A673 (cell line): ENCODE measurements at regions of chr1 and their contacts with region 1.

Region 1: GRCh38 chr1:150621497-150622302 is 7.7 kb downstream of the ENSA start:
- DNase-seq: peak; percentile 68
- H3K4me3 ChIP-seq: no peak overlapping the region
- H3K27ac ChIP-seq: no peak overlapping the region
- H3K4me1 ChIP-seq: peaks cover 20% of the 10 kb centered on the region
- H3K27me3 ChIP-seq: no peaks in the 10 kb centered on the region
- CTCF ChIP-seq: peak; percentile 73

Region 2: GRCh38 chr1:150578965-150579798 is 42.5 kb before region 1 on chr1 and contains the start of gene MCL1:
- CTCF ChIA-PET with region 1: interaction called, 7 read pairs
- POLR2A ChIA-PET with region 1: interaction called, 4 read pairs
- intact Hi-C with region 1: loop called (anchors 2 kb)
- DNase-seq: peak; percentile 97
- H3K4me3 ChIP-seq: peak within 1 kb of the TSS; percentile 90
- H3K27ac ChIP-seq: peak within 1 kb of the TSS; percentile 98
- H3K4me1 ChIP-seq: peaks cover 26% of the 10 kb centered on the region
- H3K27me3 ChIP-seq: no peaks in the 10 kb centered on the region
- CTCF ChIP-seq: no peak
- total RNA-seq, gene MCL1: 123 and 163 TPM in 2 replicates

Region 3: GRCh38 chr1:150813058-150813707 is 191.5 kb after region 1 on chr1:
- CTCF ChIA-PET with region 1: interaction called, 6 read pairs
- POLR2A ChIA-PET with region 1: no interaction called
- intact Hi-C with region 1: loop called (anchors 5 kb)
- DNase-seq: peak; percentile 54
- H3K4me3 ChIP-seq: no peak overlapping the region
- H3K27ac ChIP-seq: no peak overlapping the region
- H3K4me1 ChIP-seq: peaks cover 5% of the 10 kb centered on the region
- H3K27me3 ChIP-seq: no peaks in the 10 kb centered on the region
- CTCF ChIP-seq: peak; percentile 61